Activated CD4-positive, alpha-beta T cell treated with anti-CD3 and anti-CD28 coated beads for 36 hours (primary cell): ENCODE measurements at regions of chr7 and their contacts with region 1.

Region 1: GRCh38 chr7:105060437-105060836 is 46.4 kb downstream of the KMT2E start:
- DNase-seq: no peak
- ATAC-seq: no peak
- H3K4me3 Mint-ChIP-seq: no peak overlapping the region
- H3K27ac Mint-ChIP-seq: no peak overlapping the region
- H3K4me1 Mint-ChIP-seq: peaks cover 56% of the 10 kb centered on the region
- H3K27me3 Mint-ChIP-seq: no peaks in the 10 kb centered on the region

Region 2: GRCh38 chr7:104838537-104839299 is 221.7 kb before region 1 on chr7:
- CTCF ChIA-PET with region 1: no interaction called
- POLR2A ChIA-PET with region 1: no interaction called
- intact Hi-C with region 1: no loop called
- DNase-seq: no peak
- ATAC-seq: no peak
- H3K4me3 Mint-ChIP-seq: no peak overlapping the region
- H3K27ac Mint-ChIP-seq: no peak overlapping the region
- H3K4me1 Mint-ChIP-seq: no peaks in the 10 kb centered on the region
- H3K27me3 Mint-ChIP-seq: peaks cover 21% of the 10 kb centered on the region

Region 3: DNA sequence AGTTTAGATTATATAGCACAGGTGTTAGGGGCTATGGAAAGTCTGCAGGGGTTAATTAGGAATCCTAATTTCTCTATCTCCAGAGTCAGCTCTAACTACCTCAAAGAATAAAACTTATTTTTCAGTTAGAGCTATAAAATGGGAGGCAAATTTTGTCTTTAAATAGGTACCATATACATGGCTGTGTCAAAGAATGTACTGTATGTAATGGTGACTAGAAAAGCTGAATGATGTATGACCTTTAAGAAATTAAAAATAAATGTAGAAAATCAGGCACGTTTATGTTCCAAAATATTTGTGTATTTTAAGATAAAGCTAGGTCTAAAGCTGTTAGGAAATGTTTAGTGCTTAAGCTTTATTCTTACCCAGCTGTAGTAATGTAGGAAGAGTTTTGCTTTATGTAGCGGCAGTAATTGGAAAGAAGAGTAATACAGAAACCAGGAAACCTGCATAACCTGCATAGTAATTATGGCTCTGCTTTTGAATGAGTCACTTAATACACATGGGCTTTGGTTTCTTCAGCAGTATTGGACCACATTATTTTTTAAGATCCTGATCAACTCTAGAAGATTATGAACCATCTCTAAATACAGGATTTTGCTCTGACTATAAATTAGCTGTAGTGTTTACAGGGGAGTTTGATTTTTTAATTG is 38.6 kb after region 1 on chr7:
- CTCF ChIA-PET with region 1: interaction called, 3 read pairs
- POLR2A ChIA-PET with region 1: no interaction called
- intact Hi-C with region 1: loop called in 1 of 2 experiments (anchors 1 kb)
- DNase-seq: no peak
- ATAC-seq: peak; percentile 89
- H3K4me3 Mint-ChIP-seq: no peak overlapping the region
- H3K27ac Mint-ChIP-seq: peak overlapping the region; percentile 89
- H3K4me1 Mint-ChIP-seq: peaks cover 63% of the 10 kb centered on the region
- H3K27me3 Mint-ChIP-seq: no peaks in the 10 kb centered on the region